Activated T-helper 2 cell treated with anti-CD3 and anti-CD28 coated beads, Interferon-gamma antibody, Interleukin-2, Interleukin-4, amounts not matched to agents 10 μg/mL and 5 μg/mL and 100 μg/mL, durations not matched to agents 14 hours and 24 hours and 36 hours (primary cell): ENCODE measurements at regions of chr12 and their contacts with region 1.

Region 1: GRCh38 chr12:56448860-56449621 is at the start of gene TIMELESS:
- DNase-seq: peak; percentile 88
- H3K4me3 Mint-ChIP-seq: peak within 1 kb of the TSS; percentile 86
- H3K27ac Mint-ChIP-seq: peak within 1 kb of the TSS; percentile 86
- H3K4me1 Mint-ChIP-seq: peaks cover 24% of the 10 kb centered on the region
- H3K27me3 Mint-ChIP-seq: no peaks in the 10 kb centered on the region
- total RNA-seq, gene TIMELESS: 43.7 and 45.6 TPM in 2 replicates

Region 2: DNA sequence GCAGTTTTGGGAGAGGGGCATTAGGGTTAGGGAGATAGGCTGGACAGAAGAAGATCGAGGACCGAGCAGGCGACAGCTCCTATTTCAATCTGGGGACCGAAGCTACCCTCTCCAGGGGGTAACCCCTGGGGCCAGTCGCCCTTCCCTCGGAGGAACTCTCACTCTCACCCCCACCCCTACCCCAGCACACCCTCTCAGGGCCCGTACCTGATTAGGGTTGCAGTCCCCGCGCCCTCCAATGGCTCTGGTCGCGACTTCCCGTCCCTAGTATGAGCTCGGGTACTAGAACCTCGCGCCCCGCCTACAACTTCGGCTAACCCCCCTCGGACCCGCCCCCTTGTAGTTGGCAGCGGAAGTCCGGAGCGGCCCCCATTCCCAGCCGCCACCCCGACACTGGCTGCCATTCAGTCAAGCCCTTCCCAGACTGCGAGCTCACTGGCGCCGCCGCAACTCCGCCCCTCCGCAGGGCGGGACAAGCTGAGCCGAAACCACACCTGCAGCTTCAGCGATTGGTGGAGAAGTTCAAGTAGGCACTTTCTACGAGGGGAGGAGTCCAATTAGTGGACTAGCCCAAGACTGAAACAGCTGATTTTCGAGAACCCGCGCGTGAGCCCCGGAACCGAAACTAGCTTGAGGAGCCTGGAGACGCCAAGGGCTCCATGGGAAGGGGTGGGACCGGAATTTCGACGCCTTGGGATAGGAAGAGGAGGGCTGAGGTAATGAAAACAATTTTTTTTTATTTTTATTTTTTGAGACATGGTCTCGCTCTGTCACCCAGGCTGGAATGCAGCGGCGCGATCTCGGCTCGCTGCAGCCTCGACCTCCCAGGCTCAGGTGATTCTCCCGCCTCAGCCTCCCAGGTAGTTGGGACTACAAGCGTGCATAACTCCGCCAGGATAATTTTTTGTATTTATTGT is 88.9 kb before region 1 on chr12 and contains the start of gene STAT2:
- intact Hi-C with region 1: loop called (anchors 1 kb)
- DNase-seq: peak; percentile 100
- H3K4me3 Mint-ChIP-seq: peak within 1 kb of the TSS; percentile 89
- H3K27ac Mint-ChIP-seq: peak within 1 kb of the TSS; percentile 90
- H3K4me1 Mint-ChIP-seq: peaks cover 24% of the 10 kb centered on the region
- H3K27me3 Mint-ChIP-seq: no peaks in the 10 kb centered on the region
- total RNA-seq, gene STAT2: 70.3 and 75.0 TPM in 2 replicates

Region 3: GRCh38 chr12:56468216-56469006 is 19.4 kb after region 1 on chr12 and contains the start of gene SPRYD4:
- intact Hi-C with region 1: loop called (anchors 1 kb)
- DNase-seq: peak; percentile 93
- H3K4me3 Mint-ChIP-seq: peak within 1 kb of the TSS; percentile 98
- H3K27ac Mint-ChIP-seq: peak within 1 kb of the TSS; percentile 98
- H3K4me1 Mint-ChIP-seq: peaks cover 18% of the 10 kb centered on the region
- H3K27me3 Mint-ChIP-seq: no peaks in the 10 kb centered on the region
- total RNA-seq, gene SPRYD4: 4.4 and 4.5 TPM in 2 replicates

Region 4: GRCh38 chr12:56581418-56582145 is 132.5 kb after region 1 on chr12:
- intact Hi-C with region 1: no loop called
- DNase-seq: no peak
- H3K4me3 Mint-ChIP-seq: no peak overlapping the region
- H3K27ac Mint-ChIP-seq: peak overlapping the region; percentile 53
- H3K4me1 Mint-ChIP-seq: peaks cover 16% of the 10 kb centered on the region
- H3K27me3 Mint-ChIP-seq: no peaks in the 10 kb centered on the region